CD4-positive, alpha-beta memory T cell (primary cell): ENCODE measurements at regions of chr11 and their contacts with region 1.

Region 1: GRCh38 chr11:58579192-58580129 is 598 bp downstream of the ZFP91 start:
- DNase-seq: peak; percentile 89 to 94 (median 90)
- H3K4me3 ChIP-seq: peak overlapping the region; percentile 63 to 81
- H3K4me3 Mint-ChIP-seq: peak overlapping the region; percentile 93 to 99 (median 98)
- H3K27ac ChIP-seq: peak overlapping the region; percentile 99
- H3K27ac Mint-ChIP-seq: peak overlapping the region; percentile 98 to 100 (median 100)
- H3K4me1 ChIP-seq: peaks cover 70% of the 10 kb centered on the region
- H3K4me1 Mint-ChIP-seq: peaks cover 37 to 86% (median 58%) of the 10 kb centered on the region in 4 donors
- H3K27me3 ChIP-seq: no peaks in the 10 kb centered on the region
- H3K27me3 Mint-ChIP-seq: peaks cover 0 to 3% of the 10 kb centered on the region in 2 donors

Region 2: DNA sequence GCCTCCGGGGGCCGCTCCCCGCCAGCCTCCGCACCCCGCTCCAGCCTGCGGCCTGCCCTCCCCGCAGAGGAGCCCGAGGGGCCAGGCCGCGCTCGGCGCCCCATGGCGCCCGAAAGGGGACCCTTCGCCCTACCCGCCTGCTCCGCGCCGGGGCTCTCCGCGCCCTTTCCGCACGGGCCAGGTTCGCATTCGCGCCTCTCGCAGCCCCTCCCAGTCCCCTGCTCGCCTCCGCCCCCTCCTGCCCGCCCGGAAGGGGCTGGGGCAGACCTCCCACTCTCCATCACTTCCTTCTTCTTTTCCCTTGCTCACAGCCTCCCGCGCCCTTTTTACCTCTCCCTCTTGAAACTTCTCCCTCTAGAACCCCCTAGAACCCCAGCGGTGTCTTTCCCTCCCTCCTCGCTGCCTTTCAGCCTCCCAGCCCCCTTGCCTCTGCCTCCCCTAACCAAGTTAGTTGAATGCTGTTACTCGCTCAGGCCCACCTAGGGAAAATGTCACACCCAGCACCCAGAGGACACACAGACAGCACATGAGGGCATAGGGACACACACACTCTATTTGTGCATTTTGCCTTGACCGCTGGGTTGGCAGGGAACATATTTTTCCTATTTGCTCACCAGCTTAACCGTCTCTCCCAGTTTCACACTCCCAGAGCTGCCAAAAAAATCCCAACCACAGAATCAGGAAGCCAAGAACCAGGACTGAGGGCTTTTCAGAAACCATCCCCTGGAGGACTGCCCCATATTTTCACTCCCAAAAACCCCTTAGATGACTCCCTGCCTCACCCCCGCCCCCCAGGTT is 1152.3 kb before region 1 on chr11 and contains the start of gene SLC43A3:
- CTCF ChIA-PET with region 1: no interaction called
- POLR2A ChIA-PET with region 1: no interaction called
- intact Hi-C with region 1: loop called (anchors 2 kb)
- DNase-seq: peak; percentile 36 to 62 (median 37)
- H3K4me3 ChIP-seq: peak within 1 kb of the TSS; percentile 32 to 58
- H3K4me3 Mint-ChIP-seq: peak within 1 kb of the TSS; percentile 83 to 93 (median 88)
- H3K27ac ChIP-seq: peak within 1 kb of the TSS; percentile 45
- H3K27ac Mint-ChIP-seq: peak within 1 kb of the TSS; percentile 78 to 94 (median 90)
- H3K4me1 ChIP-seq: peaks cover 34% of the 10 kb centered on the region
- H3K4me1 Mint-ChIP-seq: peaks cover 33 to 56% (median 40%) of the 10 kb centered on the region in 4 donors
- H3K27me3 ChIP-seq: no peaks in the 10 kb centered on the region
- H3K27me3 Mint-ChIP-seq: no peaks in the 10 kb centered on the region
- total RNA-seq, gene SLC43A3: 15.1 to 15.6 TPM

Region 3: GRCh38 chr11:57667736-57668435 is 911.6 kb before region 1 on chr11 and contains the start of gene ZDHHC5:
- CTCF ChIA-PET with region 1: no interaction called
- POLR2A ChIA-PET with region 1: interaction called, 3 read pairs
- intact Hi-C with region 1: loop called (anchors 1 kb)
- DNase-seq: peak; percentile 99 to 100 (median 100)
- H3K4me3 ChIP-seq: peak within 1 kb of the TSS; percentile 75 to 93
- H3K4me3 Mint-ChIP-seq: peak within 1 kb of the TSS; percentile 88 to 99 (median 96)
- H3K27ac ChIP-seq: peak within 1 kb of the TSS; percentile 91
- H3K27ac Mint-ChIP-seq: peak within 1 kb of the TSS; percentile 98 to 100 (median 99)
- H3K4me1 ChIP-seq: peaks cover 46% of the 10 kb centered on the region
- H3K4me1 Mint-ChIP-seq: peaks cover 33 to 67% (median 45%) of the 10 kb centered on the region in 4 donors
- H3K27me3 ChIP-seq: no peaks in the 10 kb centered on the region
- H3K27me3 Mint-ChIP-seq: peaks cover 0 to 5% of the 10 kb centered on the region in 2 donors
- total RNA-seq, gene ZDHHC5: 73.2 to 75.8 TPM

Region 4: GRCh38 chr11:58503361-58503856 is 76.1 kb before region 1 on chr11:
- CTCF ChIA-PET with region 1: no interaction called
- POLR2A ChIA-PET with region 1: no interaction called
- intact Hi-C with region 1: no loop called
- DNase-seq: no peak
- H3K4me3 ChIP-seq: no peak overlapping the region
- H3K4me3 Mint-ChIP-seq: no peak overlapping the region
- H3K27ac ChIP-seq: no peak overlapping the region
- H3K27ac Mint-ChIP-seq: peak overlapping the region in 1 of 7 donors; percentile 9
- H3K4me1 ChIP-seq: no peaks in the 10 kb centered on the region
- H3K4me1 Mint-ChIP-seq: peaks cover 4 to 8% (median 5%) of the 10 kb centered on the region in 4 donors
- H3K27me3 ChIP-seq: no peaks in the 10 kb centered on the region
- H3K27me3 Mint-ChIP-seq: no peaks in the 10 kb centered on the region

Region 5: DNA sequence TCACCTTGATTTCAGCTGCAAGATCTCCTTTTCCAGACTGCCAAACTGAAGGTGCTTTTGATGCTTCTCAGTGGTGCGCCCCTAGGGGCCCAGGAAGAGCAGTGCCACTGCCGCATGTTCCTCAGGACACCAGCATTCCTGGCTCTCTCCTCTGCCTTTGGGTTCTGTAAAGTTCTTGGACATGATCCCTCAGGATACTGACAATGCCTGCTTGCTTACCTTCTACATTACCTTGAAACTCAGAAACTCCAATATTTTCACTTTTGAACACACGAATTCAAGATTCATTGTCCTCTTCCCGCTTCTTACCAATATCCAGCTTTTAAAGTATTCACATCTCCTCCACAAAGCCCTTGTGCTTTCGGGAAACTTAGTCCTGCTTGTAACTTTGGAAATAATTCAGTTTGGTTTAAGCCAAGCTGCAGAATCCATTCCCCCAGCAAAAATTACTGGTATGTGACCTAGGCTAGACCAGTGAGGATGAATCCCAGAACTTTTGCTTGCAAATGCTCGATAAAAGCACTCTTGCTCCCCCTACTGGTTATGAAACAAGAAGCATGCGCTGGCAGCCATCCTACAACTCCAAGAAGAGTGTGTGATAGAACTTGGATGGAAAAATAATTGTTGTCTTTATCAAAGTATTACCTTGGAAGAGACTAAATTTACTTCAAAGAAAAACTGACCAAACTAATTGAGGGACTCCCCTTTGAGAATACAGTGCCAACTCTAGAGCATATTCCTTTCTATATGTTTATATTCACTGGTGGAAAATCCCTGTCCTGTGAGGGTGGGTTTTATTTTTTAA is 55.0 kb before region 1 on chr11:
- CTCF ChIA-PET with region 1: interaction called, 16 read pairs
- POLR2A ChIA-PET with region 1: interaction called, 29 read pairs
- intact Hi-C with region 1: loop called (anchors 1 kb)
- DNase-seq: peak; percentile 57 to 66 (median 63)
- H3K4me3 ChIP-seq: peak overlapping the region in 1 of 2 donors; percentile 22
- H3K4me3 Mint-ChIP-seq: peak overlapping the region; percentile 68 to 85 (median 76)
- H3K27ac ChIP-seq: peak overlapping the region; percentile 55
- H3K27ac Mint-ChIP-seq: peak overlapping the region; percentile 77 to 97 (median 94)
- H3K4me1 ChIP-seq: peaks cover 35% of the 10 kb centered on the region
- H3K4me1 Mint-ChIP-seq: peaks cover 31 to 54% (median 40%) of the 10 kb centered on the region in 4 donors
- H3K27me3 ChIP-seq: no peaks in the 10 kb centered on the region
- H3K27me3 Mint-ChIP-seq: no peaks in the 10 kb centered on the region

Region 6: GRCh38 chr11:58629857-58630256 is 50.4 kb after region 1 on chr11:
- CTCF ChIA-PET with region 1: interaction called, 11 read pairs
- POLR2A ChIA-PET with region 1: interaction called, 3 read pairs
- intact Hi-C with region 1: no loop called
- DNase-seq: peak in 4 of 5 donors; percentile 12 to 34 (median 18)
- H3K4me3 ChIP-seq: no peak overlapping the region
- H3K4me3 Mint-ChIP-seq: no peak overlapping the region
- H3K27ac ChIP-seq: no peak overlapping the region
- H3K27ac Mint-ChIP-seq: peak overlapping the region in 2 of 7 donors; percentile 1 to 25
- H3K4me1 ChIP-seq: no peaks in the 10 kb centered on the region
- H3K4me1 Mint-ChIP-seq: peaks cover 0 to 4% (median 3%) of the 10 kb centered on the region in 4 donors
- H3K27me3 ChIP-seq: no peaks in the 10 kb centered on the region
- H3K27me3 Mint-ChIP-seq: no peaks in the 10 kb centered on the region

Region 7: GRCh38 chr11:59106363-59107336 is 527.2 kb after region 1 on chr11 and contains the start of gene FAM111B:
- CTCF ChIA-PET with region 1: no interaction called
- POLR2A ChIA-PET with region 1: no interaction called
- intact Hi-C with region 1: loop called (anchors 10 kb)
- DNase-seq: peak; percentile 57 to 80 (median 62)
- H3K4me3 ChIP-seq: peak within 1 kb of the TSS; percentile 36 to 70
- H3K4me3 Mint-ChIP-seq: peak within 1 kb of the TSS; percentile 89 to 94 (median 92)
- H3K27ac ChIP-seq: peak within 1 kb of the TSS; percentile 30
- H3K27ac Mint-ChIP-seq: peak within 1 kb of the TSS; percentile 63 to 94 (median 86)
- H3K4me1 ChIP-seq: peaks cover 19% of the 10 kb centered on the region
- H3K4me1 Mint-ChIP-seq: peaks cover 27 to 41% (median 32%) of the 10 kb centered on the region in 4 donors
- H3K27me3 ChIP-seq: no peaks in the 10 kb centered on the region
- H3K27me3 Mint-ChIP-seq: no peaks in the 10 kb centered on the region
- total RNA-seq, gene FAM111B: 0.23 to 0.53 TPM